Right lobe of liver (tissue), 6 donors: ENCODE measurements at regions of chr7 and their contacts with region 1.

Region 1: DNA sequence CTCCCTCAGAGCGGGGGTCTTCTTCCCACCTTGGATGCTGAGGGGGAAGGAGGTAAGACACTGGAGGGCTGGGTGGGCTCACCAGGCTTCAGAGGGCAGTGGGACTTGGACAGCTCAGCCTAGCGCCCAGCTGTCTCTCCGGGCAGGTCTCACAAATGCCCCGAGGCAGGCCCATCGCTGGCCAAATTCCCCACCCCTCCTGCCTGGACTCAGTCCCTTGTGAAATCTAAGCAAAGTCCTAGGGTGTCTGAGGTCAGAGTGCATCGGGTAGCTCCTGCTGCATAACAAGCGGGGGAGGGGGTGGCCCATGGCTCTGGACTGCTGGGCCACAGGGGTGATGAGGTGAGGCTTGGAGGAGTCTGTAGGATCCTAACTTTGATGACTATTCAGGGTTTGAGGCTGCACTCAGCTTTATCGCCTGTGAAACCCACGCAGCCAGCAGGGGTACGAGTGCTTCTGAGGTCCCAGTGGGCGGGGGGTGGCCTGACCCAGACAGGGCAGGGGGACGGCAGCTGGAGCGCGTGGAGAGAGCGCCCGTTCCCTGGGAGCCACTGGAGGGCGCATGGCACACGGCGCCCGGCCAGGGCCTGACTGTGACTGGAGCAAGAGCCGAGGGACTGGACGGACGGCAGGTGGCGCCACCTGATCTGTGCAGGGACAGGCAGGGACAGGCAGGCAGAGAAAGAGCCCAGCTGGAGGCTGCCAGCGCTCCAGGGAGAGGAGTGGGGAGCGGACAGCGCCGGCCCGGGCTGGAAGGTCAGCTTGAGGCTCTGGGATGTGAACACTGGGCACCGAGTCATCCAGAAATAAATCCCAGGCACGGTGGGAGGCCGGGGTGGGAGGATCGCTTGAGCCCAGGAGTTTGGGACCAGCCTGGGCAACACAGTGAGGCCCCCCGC is 10.0 kb downstream of the CYP2W1 start:
- DNase-seq: peak; percentile 98 to 99 (median 99)
- ATAC-seq: peak; percentile 97 to 99 (median 98)
- H3K4me3 ChIP-seq: no peak overlapping the region
- H3K27ac ChIP-seq: no peak overlapping the region
- H3K4me1 ChIP-seq: peaks cover 0 to 7% (median 0%) of the 10 kb centered on the region in 4 donors
- H3K27me3 ChIP-seq: no peaks in the 10 kb centered on the region
- CTCF ChIP-seq: peak; percentile 100
- POLR2A ChIP-seq: no peak

Region 2: GRCh38 chr7:1059200-1060091 is 66.5 kb after region 1 on chr7:
- intact Hi-C with region 1: loop called (anchors 5 kb)
- DNase-seq: peak in 1 of 3 donors; percentile 59
- ATAC-seq: peak in 3 of 4 donors; percentile 9 to 22 (median 22)
- H3K4me3 ChIP-seq: no peak overlapping the region
- H3K27ac ChIP-seq: no peak overlapping the region
- H3K4me1 ChIP-seq: peaks cover 0 to 17% (median 5%) of the 10 kb centered on the region in 4 donors
- H3K27me3 ChIP-seq: no peaks in the 10 kb centered on the region
- CTCF ChIP-seq: no peak
- POLR2A ChIP-seq: no peak

Region 3: DNA sequence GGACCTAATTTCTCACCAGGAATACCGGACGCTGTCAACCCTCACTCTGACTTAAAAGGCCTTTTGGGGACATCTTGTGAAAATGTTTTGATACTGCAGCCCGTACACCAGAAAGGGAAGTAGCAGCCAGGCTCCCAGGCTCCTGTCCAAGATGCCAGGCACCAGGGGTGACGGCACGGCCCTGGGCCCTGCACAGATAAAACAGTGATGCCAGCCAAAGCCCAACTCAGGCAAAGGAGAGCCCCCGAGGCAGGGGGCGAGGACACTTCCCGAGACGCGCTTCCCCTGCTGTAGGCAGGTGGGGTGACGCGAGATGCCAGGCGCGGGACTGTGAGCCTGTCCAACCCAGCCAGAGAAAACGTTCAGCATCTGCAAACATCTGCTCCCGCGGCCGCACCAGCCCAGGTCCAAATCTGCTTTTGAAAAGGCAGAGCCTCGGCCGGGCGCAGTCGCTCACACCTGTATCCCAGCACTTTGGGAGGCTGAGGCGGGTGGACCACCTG is 151.4 kb after region 1 on chr7:
- intact Hi-C with region 1: loop called in 1 of 2 experiments (anchors 10 kb)
- DNase-seq: peak; percentile 73 to 82 (median 81)
- ATAC-seq: peak; percentile 94 to 99 (median 98)
- H3K4me3 ChIP-seq: no peak overlapping the region
- H3K27ac ChIP-seq: no peak overlapping the region
- H3K4me1 ChIP-seq: peaks cover 0 to 11% (median 2%) of the 10 kb centered on the region in 4 donors
- H3K27me3 ChIP-seq: no peaks in the 10 kb centered on the region
- CTCF ChIP-seq: peak; percentile 40 to 54 (median 52)
- POLR2A ChIP-seq: no peak

Region 4: DNA sequence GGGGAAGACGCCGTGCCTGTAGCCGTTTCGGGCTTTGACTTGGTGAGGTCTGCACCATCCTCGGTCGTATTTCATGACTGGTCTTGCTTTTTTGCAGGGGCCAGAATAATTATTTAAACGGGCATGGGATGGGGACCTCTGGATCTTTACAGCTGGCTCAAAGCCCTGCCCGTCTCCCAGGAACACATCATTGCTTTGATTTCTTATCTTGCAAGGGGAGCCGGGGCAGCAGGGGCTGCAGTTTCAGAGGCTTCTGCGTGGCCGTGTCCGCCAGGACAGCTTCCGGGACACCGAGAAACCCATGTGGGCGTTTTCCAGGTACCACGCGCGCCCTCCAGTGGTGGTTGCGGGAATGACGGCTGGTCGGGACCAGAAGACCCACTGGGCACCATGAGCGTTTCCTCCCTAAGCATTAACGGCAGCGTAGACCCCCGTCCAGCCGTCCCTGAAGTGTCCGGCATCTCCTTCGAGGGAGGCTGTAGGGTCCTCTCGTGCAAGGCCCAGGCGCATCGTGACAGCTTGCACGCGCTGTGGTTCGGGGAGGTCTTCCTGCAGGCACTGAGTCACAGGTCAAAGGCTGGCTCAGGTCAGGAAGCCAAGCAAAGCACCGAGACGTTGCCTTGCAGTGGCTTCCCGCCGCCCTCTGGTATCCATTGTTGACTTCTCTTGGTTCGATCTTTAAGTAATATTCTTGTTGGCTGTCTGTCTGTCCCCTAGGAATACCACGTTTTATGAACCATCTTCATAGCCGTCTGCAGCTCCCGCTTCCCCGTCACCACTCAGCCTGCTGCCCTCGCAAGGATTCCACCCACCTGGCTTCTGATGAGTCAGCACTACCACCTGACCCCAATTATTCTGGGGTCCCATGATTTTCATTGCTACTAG is 183.3 kb after region 1 on chr7:
- intact Hi-C with region 1: loop called in 1 of 2 experiments (anchors 10 kb)
- DNase-seq: peak; percentile 80 to 88 (median 86)
- ATAC-seq: peak; percentile 89 to 96 (median 92)
- H3K4me3 ChIP-seq: peak overlapping the region; percentile 0 to 35 (median 30)
- H3K27ac ChIP-seq: no peak overlapping the region
- H3K4me1 ChIP-seq: peaks cover 0 to 9% (median 2%) of the 10 kb centered on the region in 4 donors
- H3K27me3 ChIP-seq: no peaks in the 10 kb centered on the region
- CTCF ChIP-seq: peak; percentile 91 to 95 (median 94)
- POLR2A ChIP-seq: no peak